Activated CD8-positive, alpha-beta T cell treated with anti-CD3 and anti-CD28 coated beads for 36 hours (primary cell): ENCODE measurements at regions of chr11 and their contacts with region 1.

Region 1: GRCh38 chr11:60841797-60842667 is at the start of gene CCDC86:
- DNase-seq: peak; percentile 96
- ATAC-seq: peak; percentile 98
- H3K4me3 Mint-ChIP-seq: peak within 1 kb of the TSS; percentile 75
- H3K27ac Mint-ChIP-seq: peak within 1 kb of the TSS; percentile 94
- H3K4me1 Mint-ChIP-seq: peaks cover 38% of the 10 kb centered on the region
- H3K27me3 Mint-ChIP-seq: no peaks in the 10 kb centered on the region
- CTCF ChIP-seq: no peak
- total RNA-seq, gene CCDC86: 48.1 to 51.4 TPM

Region 2: DNA sequence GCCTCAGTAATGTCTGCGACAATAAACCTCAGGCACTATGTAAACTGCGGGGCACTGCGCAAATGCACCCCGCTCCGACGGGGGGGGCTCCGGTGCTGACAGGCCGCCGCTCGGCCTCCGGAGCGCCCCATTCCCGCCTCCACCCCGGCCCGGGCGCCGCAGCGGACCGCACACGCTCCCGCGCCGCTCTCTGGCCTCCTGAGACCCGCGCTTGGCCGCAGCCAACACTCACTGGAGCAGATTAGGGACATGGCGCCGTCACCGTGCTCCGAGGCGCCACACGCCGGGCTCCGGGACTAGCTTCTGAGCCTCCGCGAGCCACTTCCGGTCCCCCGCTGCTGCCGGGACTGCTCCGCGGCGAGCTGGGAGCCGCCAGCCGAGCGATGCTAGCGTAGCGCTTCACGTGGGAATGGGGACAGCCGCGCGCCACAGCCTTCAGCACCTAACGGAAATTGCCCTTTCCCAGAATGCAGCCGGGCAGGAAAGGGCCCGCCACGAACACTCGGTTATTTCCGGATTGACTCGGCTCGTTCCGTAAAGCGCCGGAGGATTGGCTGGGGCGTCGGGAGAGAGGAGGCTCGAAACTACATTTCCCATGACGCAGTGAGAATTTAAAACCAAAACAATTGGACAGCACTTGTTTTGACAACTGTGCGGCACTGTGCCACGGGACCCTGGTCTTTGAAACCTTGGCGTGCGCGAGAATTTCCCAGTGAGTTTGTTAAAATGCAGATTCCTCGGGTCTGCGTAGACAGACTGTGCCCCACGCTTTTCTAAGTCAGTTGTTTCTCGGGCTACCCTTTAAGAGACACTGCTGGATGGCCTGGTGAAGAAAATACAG is 64.3 kb after region 1 on chr11 and contains the start of gene PRPF19:
- CTCF ChIA-PET with region 1: interaction called, 3 read pairs
- POLR2A ChIA-PET with region 1: interaction called, 23 read pairs
- intact Hi-C with region 1: no loop called
- DNase-seq: peak; percentile 99
- ATAC-seq: peak; percentile 97
- H3K4me3 Mint-ChIP-seq: peak within 1 kb of the TSS; percentile 89
- H3K27ac Mint-ChIP-seq: peak within 1 kb of the TSS; percentile 95
- H3K4me1 Mint-ChIP-seq: peaks cover 50% of the 10 kb centered on the region
- H3K27me3 Mint-ChIP-seq: no peaks in the 10 kb centered on the region
- CTCF ChIP-seq: no peak
- total RNA-seq, gene PRPF19: 142 to 150 TPM